Heart right ventricle (tissue), 16 donors: ENCODE measurements at regions of chr15 and their contacts with region 1.

Region 1: GRCh38 chr15:91548549-91548948 is 305.0 kb upstream of the SLCO3A1 start:
- DNase-seq: peak; percentile 39 to 63
- ATAC-seq: peak; percentile 59 to 90 (median 85)
- H3K4me3 ChIP-seq: no peak overlapping the region
- H3K27ac ChIP-seq: peak overlapping the region in 2 of 10 donors; percentile 41 to 45
- H3K4me1 ChIP-seq: peaks cover 0 to 18% (median 3%) of the 10 kb centered on the region in 9 donors
- H3K27me3 ChIP-seq: no peaks in the 10 kb centered on the region
- CTCF ChIP-seq: no peak

Region 2: GRCh38 chr15:91689377-91689776 is 140.8 kb after region 1 on chr15:
- intact Hi-C with region 1: loop called in 1 of 10 experiments (anchors 10 kb)
- DNase-seq: no peak
- ATAC-seq: peak in 3 of 8 donors; percentile 43 to 68 (median 57)
- H3K4me3 ChIP-seq: no peak overlapping the region
- H3K27ac ChIP-seq: no peak overlapping the region
- H3K4me1 ChIP-seq: peaks cover 0 to 8% (median 0%) of the 10 kb centered on the region in 9 donors
- H3K27me3 ChIP-seq: peaks cover 0 to 9% (median 0%) of the 10 kb centered on the region in 7 donors
- CTCF ChIP-seq: no peak